SK-N-SH (cell line): ENCODE measurements at regions of chr7 and their contacts with region 1.

Region 1: GRCh38 chr7:29189743-29190201 is 4.8 kb upstream of the CHN2 start:
- DNase-seq: peak; percentile 87
- H3K4me3 ChIP-seq: no peak overlapping the region; a peak in 2 of 4 replicates
- H3K27ac ChIP-seq: no peak overlapping the region
- H3K4me1 ChIP-seq: peaks cover 0 to 6% of the 10 kb centered on the region in 2 experiments; a peak in 1 of 4 replicates
- H3K27me3 ChIP-seq: peaks cover 19% of the 10 kb centered on the region
- CTCF ChIP-seq: peak; percentile 91
- EP300 ChIP-seq: no peak
- RAD21 ChIP-seq: peak; percentile 87

Region 2: GRCh38 chr7:28955718-28956619 is 233.8 kb before region 1 on chr7:
- CTCF ChIA-PET with region 1: interaction called, 18 read pairs
- POLR2A ChIA-PET with region 1: no interaction called
- DNase-seq: peak; percentile 87
- H3K4me3 ChIP-seq: peak overlapping the region; percentile 52 to 59
- H3K27ac ChIP-seq: peak overlapping the region in 1 of 2 experiments; percentile 100; a peak in 2 of 4 replicates
- H3K4me1 ChIP-seq: peaks cover 11 to 66% of the 10 kb centered on the region in 2 experiments
- H3K27me3 ChIP-seq: peaks cover 36% of the 10 kb centered on the region
- CTCF ChIP-seq: peak; percentile 32
- EP300 ChIP-seq: no peak
- RAD21 ChIP-seq: peak; percentile 63

Region 3: GRCh38 chr7:29146057-29146706 is 43.6 kb before region 1 on chr7 and contains the start of gene CPVL:
- CTCF ChIA-PET with region 1: interaction called, 26 read pairs
- POLR2A ChIA-PET with region 1: no interaction called
- DNase-seq: peak; percentile 62
- H3K4me3 ChIP-seq: peak within 1 kb of the TSS in 1 of 2 experiments; percentile 31; a peak in 2 of 4 replicates
- H3K27ac ChIP-seq: no peak within 1 kb of the TSS
- H3K4me1 ChIP-seq: peaks cover 0 to 11% of the 10 kb centered on the region in 2 experiments; a peak in 1 of 4 replicates
- H3K27me3 ChIP-seq: peaks cover 27% of the 10 kb centered on the region
- CTCF ChIP-seq: no peak
- EP300 ChIP-seq: no peak
- RAD21 ChIP-seq: no peak
- polyA plus RNA-seq, gene CPVL: 0.16 TPM in 1 of 2 replicates, not detected in the other

Region 4: GRCh38 chr7:29228289-29229011 is 38.7 kb after region 1 on chr7:
- CTCF ChIA-PET with region 1: interaction called, 24 read pairs
- POLR2A ChIA-PET with region 1: no interaction called
- DNase-seq: no peak
- H3K4me3 ChIP-seq: no peak overlapping the region
- H3K27ac ChIP-seq: no peak overlapping the region
- H3K4me1 ChIP-seq: no peaks in the 10 kb centered on the region; a peak in 2 of 4 replicates
- H3K27me3 ChIP-seq: no peaks in the 10 kb centered on the region
- CTCF ChIP-seq: no peak
- EP300 ChIP-seq: no peak
- RAD21 ChIP-seq: no peak

Region 5: DNA sequence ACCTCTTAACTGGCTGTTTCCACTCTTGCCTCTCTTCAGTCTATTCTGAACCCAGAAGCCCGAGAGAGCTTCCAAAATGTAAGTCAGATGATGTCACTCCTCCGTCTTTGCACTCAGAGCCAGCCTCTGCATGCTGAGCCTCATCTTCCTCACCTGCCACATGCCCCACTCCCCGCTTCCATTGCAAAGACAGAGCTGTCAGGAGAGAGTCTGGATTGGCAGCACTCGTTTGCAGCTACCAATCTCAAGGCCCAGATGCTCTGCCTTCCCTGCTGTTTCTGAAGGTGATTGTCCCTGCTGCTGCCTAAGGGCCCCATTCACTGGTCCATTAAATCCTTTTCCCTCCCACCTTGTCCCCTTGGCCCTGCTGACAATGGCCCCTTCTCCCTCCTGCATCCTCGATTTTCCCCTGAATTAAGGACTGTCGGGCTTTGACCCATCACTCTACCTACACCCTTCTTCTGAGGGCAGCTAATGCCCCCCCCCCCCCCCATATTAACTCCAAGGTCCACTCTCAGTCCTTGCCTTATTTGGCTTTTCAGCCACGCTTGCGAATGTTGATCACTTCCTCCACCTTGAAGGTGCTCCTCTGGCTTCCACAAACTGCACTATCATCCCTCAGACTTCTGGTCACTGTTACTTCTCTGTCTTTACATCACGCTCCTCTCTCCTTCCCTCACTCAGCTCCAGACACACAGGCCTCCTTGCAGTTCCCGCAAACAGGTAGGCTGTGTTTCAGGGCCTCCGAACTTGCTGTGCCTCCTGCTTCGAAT is 103.3 kb after region 1 on chr7:
- CTCF ChIA-PET with region 1: interaction called, 10 read pairs
- POLR2A ChIA-PET with region 1: no interaction called
- DNase-seq: no peak
- H3K4me3 ChIP-seq: no peak overlapping the region
- H3K27ac ChIP-seq: no peak overlapping the region
- H3K4me1 ChIP-seq: peaks cover 0 to 16% of the 10 kb centered on the region in 2 experiments; a peak in 1 of 4 replicates
- H3K27me3 ChIP-seq: no peaks in the 10 kb centered on the region
- CTCF ChIP-seq: no peak
- EP300 ChIP-seq: no peak
- RAD21 ChIP-seq: no peak

Region 6: GRCh38 chr7:29337546-29338116 is 147.9 kb after region 1 on chr7:
- CTCF ChIA-PET with region 1: interaction called, 185 read pairs
- POLR2A ChIA-PET with region 1: no interaction called
- DNase-seq: no peak
- H3K4me3 ChIP-seq: no peak overlapping the region
- H3K27ac ChIP-seq: no peak overlapping the region
- H3K4me1 ChIP-seq: peaks cover 8 to 11% of the 10 kb centered on the region in 2 experiments; a peak in 3 of 4 replicates
- H3K27me3 ChIP-seq: 0 out of 2 replicates have a peak, but pooled peaks cover 4% of the 10 kb centered on the region
- CTCF ChIP-seq: no peak
- EP300 ChIP-seq: no peak
- RAD21 ChIP-seq: no peak

Region 7: DNA sequence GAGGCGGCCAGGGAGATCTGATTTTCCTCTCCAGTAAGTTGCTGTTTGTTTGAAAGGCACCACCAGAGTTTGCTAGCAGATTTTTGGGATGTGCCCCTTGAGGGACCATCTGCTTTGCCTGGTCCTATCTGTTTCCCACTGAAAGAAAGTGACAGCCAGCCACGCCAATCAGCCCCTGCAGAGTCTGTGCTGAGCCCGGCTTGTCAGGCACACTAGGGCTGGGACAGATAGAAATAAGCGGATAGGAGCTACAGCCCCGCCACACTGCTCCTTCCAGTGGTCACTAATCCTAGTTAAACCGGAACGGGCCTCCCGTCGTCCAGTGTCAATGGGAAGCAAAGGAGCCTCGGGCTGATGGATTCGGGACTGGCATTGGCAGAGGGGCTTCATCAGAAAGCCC is 212.0 kb after region 1 on chr7:
- CTCF ChIA-PET with region 1: interaction called, 236 read pairs
- POLR2A ChIA-PET with region 1: no interaction called
- DNase-seq: no peak
- H3K4me3 ChIP-seq: no peak overlapping the region
- H3K27ac ChIP-seq: no peak overlapping the region
- H3K4me1 ChIP-seq: no peaks in the 10 kb centered on the region; a peak in 1 of 4 replicates
- H3K27me3 ChIP-seq: peaks cover 11% of the 10 kb centered on the region; the same call in 1 of the 2 replicates
- CTCF ChIP-seq: no peak
- EP300 ChIP-seq: no peak
- RAD21 ChIP-seq: no peak